ENCODE measurements at regions of chr12 and their contacts with region 1.

Region 1: GRCh38 chr12:52221912-52222457 is 11.1 kb upstream of the KRT7 start:
- DNase-seq: peak; percentile 93
- ATAC-seq: peak; percentile 91
- H3K4me3 Mint-ChIP-seq: no peak overlapping the region
- H3K27ac Mint-ChIP-seq: no peak overlapping the region
- H3K4me1 Mint-ChIP-seq: peaks cover 5% of the 10 kb centered on the region; the same call in 1 of the 2 replicates
- H3K27me3 Mint-ChIP-seq: peaks cover 8% of the 10 kb centered on the region
- CTCF ChIP-seq: peak; percentile 87

Region 2: DNA sequence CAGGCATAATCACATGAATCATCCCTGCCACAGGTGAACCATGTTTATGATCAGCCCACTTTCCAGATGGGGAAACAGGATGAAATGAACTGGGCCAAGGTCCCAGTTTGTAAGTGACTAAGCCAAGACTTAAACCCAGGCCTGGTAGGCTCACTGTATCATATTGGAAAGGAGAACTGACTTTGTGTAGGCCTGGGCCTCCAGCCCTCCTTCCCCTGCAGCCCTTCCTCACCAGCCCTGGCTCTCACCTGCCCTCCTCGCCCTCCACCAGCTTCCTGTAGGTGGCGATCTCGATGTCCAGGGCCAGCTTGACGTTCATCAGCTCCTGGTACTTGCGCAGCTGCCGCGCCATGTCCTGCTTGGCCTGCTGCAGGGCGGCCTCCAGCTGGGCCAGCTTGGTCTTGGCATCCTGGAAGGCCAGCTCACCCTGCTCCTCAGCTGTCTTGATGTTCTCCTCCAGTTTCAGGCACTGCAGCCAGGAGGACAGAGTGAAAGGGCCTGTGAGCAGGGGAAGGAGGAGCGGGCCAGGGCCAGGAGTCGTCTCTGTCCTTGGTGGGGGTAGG is 50.0 kb before region 1 on chr12:
- CTCF ChIA-PET with region 1: interaction called, 11 read pairs
- POLR2A ChIA-PET with region 1: no interaction called
- DNase-seq: peak; percentile 79
- ATAC-seq: peak; percentile 71
- H3K4me3 Mint-ChIP-seq: no peak overlapping the region
- H3K27ac Mint-ChIP-seq: no peak overlapping the region
- H3K4me1 Mint-ChIP-seq: peaks cover 9% of the 10 kb centered on the region
- H3K27me3 Mint-ChIP-seq: no peaks in the 10 kb centered on the region
- CTCF ChIP-seq: 0 out of 2 replicates have a peak, but pooled peaks have one; percentile 25

Region 3: DNA sequence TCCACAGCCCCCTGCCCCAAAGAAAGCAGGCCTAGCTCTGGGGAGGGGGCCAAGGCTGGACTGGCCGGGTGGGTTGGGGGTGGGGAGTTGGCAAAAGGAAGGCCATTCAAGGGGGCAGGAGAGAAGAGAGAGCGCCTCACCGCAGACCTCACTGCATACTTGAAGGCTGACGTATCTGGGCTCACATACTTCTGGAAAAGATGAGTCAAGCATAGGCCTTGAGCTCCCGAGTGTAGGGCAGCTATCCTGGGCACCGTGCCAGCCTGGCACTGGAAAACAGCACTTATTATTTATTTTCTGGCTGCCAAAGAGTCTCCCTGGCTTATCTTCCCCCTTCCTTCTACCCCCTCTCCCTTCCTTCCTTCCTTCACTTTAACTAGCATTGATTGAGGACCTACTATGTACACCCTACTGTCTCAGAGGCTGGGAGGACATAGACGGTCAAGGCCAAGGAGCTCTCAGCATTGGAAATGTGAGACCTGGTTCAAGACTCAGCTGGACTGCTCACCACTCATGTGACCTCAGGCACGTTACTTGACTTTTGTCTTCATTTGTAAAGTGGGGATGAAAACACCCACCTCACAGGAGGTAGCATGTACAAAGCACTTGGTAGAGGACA is 29.7 kb before region 1 on chr12:
- CTCF ChIA-PET with region 1: interaction called, 20 read pairs
- POLR2A ChIA-PET with region 1: no interaction called
- DNase-seq: no peak
- ATAC-seq: no peak
- H3K4me3 Mint-ChIP-seq: no peak overlapping the region
- H3K27ac Mint-ChIP-seq: no peak overlapping the region
- H3K4me1 Mint-ChIP-seq: peaks cover 11% of the 10 kb centered on the region
- H3K27me3 Mint-ChIP-seq: no peaks in the 10 kb centered on the region
- CTCF ChIP-seq: no peak

Region 4: GRCh38 chr12:52235822-52236692 is 14.1 kb after region 1 on chr12:
- CTCF ChIA-PET with region 1: interaction called, 56 read pairs
- POLR2A ChIA-PET with region 1: no interaction called
- DNase-seq: no peak
- ATAC-seq: no peak
- H3K4me3 Mint-ChIP-seq: no peak overlapping the region
- H3K27ac Mint-ChIP-seq: no peak overlapping the region
- H3K4me1 Mint-ChIP-seq: peaks cover 58% of the 10 kb centered on the region
- H3K27me3 Mint-ChIP-seq: peaks cover 44% of the 10 kb centered on the region
- CTCF ChIP-seq: no peak

Region 5: DNA sequence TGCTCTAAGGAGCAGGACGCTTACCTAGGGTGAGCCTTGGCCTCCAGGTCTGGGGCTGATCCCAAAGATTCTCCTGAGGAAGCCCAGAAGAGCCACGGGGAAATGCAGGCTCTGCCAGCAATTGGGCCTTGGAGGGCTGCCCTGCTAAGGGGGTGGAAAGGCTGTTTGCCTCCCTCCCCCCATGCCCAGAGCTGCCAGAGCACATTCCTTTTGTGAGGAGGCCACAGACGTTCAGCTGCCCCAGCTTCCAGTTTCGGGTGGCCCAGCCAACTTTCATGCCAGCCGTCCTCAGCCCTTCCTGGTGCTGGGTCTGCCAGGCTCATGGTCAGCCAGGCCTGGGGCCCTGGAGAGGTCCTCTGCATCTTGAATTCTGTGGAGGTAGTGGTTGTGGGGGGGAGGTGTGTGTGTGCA is 27.1 kb after region 1 on chr12:
- CTCF ChIA-PET with region 1: interaction called, 27 read pairs
- POLR2A ChIA-PET with region 1: no interaction called
- DNase-seq: no peak
- ATAC-seq: no peak
- H3K4me3 Mint-ChIP-seq: no peak overlapping the region
- H3K27ac Mint-ChIP-seq: no peak overlapping the region
- H3K4me1 Mint-ChIP-seq: peaks cover 43% of the 10 kb centered on the region
- H3K27me3 Mint-ChIP-seq: peaks cover 38% of the 10 kb centered on the region
- CTCF ChIP-seq: no peak

Region 6: GRCh38 chr12:52307836-52308805 is 86.1 kb after region 1 on chr12:
- CTCF ChIA-PET with region 1: interaction called, 23 read pairs
- POLR2A ChIA-PET with region 1: no interaction called
- DNase-seq: peak; percentile 77
- ATAC-seq: peak; percentile 86
- H3K4me3 Mint-ChIP-seq: peak overlapping the region; percentile 76
- H3K27ac Mint-ChIP-seq: no peak overlapping the region
- H3K4me1 Mint-ChIP-seq: peaks cover 17% of the 10 kb centered on the region
- H3K27me3 Mint-ChIP-seq: peaks cover 57% of the 10 kb centered on the region
- CTCF ChIP-seq: no peak

Region 7: GRCh38 chr12:52327052-52327829 is 105.3 kb after region 1 on chr12:
- CTCF ChIA-PET with region 1: interaction called, 35 read pairs
- POLR2A ChIA-PET with region 1: no interaction called
- DNase-seq: peak; percentile 78
- ATAC-seq: peak; percentile 98
- H3K4me3 Mint-ChIP-seq: no peak overlapping the region
- H3K27ac Mint-ChIP-seq: no peak overlapping the region
- H3K4me1 Mint-ChIP-seq: peaks cover 4% of the 10 kb centered on the region; the same call in 1 of the 2 replicates
- H3K27me3 Mint-ChIP-seq: no peaks in the 10 kb centered on the region; the same call in 1 of the 2 replicates
- CTCF ChIP-seq: peak; percentile 26; the same call in 1 of the 2 replicates

Measured in WTC11 (cell line).